Endothelial cell of umbilical vein (primary cell): ENCODE measurements at regions of chr18 and their contacts with region 1.

Region 1: GRCh38 chr18:35143622-35144596 is 96.9 kb upstream of the ZNF397 start:
- DNase-seq: peak; percentile 80
- H3K4me3 ChIP-seq: no peak overlapping the region
- H3K27ac ChIP-seq: no peak overlapping the region
- H3K4me1 ChIP-seq: no peaks in the 10 kb centered on the region
- H3K27me3 ChIP-seq: no peaks in the 10 kb centered on the region
- CTCF ChIP-seq: peak; percentile 57 to 80
- POLR2A ChIP-seq: no peak

Region 2: GRCh38 chr18:34867520-34867919 is 276.4 kb before region 1 on chr18:
- CTCF ChIA-PET with region 1: interaction called, 40 read pairs
- POLR2A ChIA-PET with region 1: no interaction called
- dilution Hi-C with region 1: no loop called
- intact Hi-C with region 1: loop called (anchors 1 kb)
- DNase-seq: peak; percentile 10
- H3K4me3 ChIP-seq: no peak overlapping the region
- H3K27ac ChIP-seq: no peak overlapping the region
- H3K4me1 ChIP-seq: no peaks in the 10 kb centered on the region
- H3K27me3 ChIP-seq: no peaks in the 10 kb centered on the region
- CTCF ChIP-seq: peak; percentile 15 to 34
- POLR2A ChIP-seq: no peak

Region 3: DNA sequence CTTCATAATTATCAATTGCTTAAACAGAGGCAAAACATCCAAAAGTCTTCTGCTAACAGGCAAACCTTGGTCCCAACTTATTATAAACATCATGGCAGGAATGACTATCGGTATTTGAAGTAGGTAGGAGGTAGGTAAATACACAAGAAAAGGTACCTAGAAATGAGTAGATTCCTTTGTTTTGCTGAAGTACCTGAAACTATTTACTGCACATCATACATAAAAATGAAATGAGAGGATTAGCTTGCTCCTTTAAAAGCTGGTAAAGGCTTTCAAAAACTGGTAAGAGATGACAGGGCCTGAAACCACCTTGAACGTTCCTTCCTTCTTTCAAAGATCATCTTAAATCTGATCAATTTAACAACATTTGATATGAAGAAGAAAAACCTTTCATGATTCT is 157.9 kb before region 1 on chr18:
- CTCF ChIA-PET with region 1: no interaction called
- POLR2A ChIA-PET with region 1: no interaction called
- dilution Hi-C with region 1: no loop called
- intact Hi-C with region 1: no loop called
- DNase-seq: no peak
- H3K4me3 ChIP-seq: no peak overlapping the region
- H3K27ac ChIP-seq: no peak overlapping the region
- H3K4me1 ChIP-seq: no peaks in the 10 kb centered on the region
- H3K27me3 ChIP-seq: peaks cover 2 to 9% of the 10 kb centered on the region in 2 experiments
- CTCF ChIP-seq: no peak
- POLR2A ChIP-seq: no peak

Region 4: DNA sequence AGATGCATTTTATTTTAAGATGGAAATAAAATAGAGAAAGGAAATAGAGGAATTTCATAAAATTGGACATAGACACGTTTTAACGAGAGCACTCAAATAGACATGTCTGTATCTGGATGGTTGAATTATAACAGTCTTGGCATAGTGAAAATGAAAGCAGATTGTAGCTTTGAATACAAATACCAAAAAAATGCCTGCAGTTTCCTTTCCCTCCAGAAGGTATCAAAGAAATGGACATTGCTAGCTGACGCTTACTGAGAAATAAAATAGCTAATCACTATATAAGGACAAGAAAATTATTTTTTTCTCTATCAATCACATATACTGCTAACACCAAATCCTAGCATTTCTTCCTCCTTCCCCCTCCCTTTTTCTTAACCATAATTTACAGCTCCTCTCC is 114.1 kb before region 1 on chr18:
- CTCF ChIA-PET with region 1: interaction called, 44 read pairs
- POLR2A ChIA-PET with region 1: interaction called, 4 read pairs
- dilution Hi-C with region 1: no loop called
- intact Hi-C with region 1: loop called (anchors 5 kb)
- DNase-seq: peak; percentile 34
- H3K4me3 ChIP-seq: no peak overlapping the region
- H3K27ac ChIP-seq: no peak overlapping the region
- H3K4me1 ChIP-seq: peaks cover 13% of the 10 kb centered on the region
- H3K27me3 ChIP-seq: no peaks in the 10 kb centered on the region
- CTCF ChIP-seq: no peak
- POLR2A ChIP-seq: no peak

Region 5: GRCh38 chr18:35071819-35072247 is 72.1 kb before region 1 on chr18:
- CTCF ChIA-PET with region 1: interaction called, 14 read pairs
- POLR2A ChIA-PET with region 1: no interaction called
- dilution Hi-C with region 1: no loop called
- intact Hi-C with region 1: loop called (anchors 5 kb)
- DNase-seq: peak; percentile 41
- H3K4me3 ChIP-seq: no peak overlapping the region
- H3K27ac ChIP-seq: peak overlapping the region; percentile 56
- H3K4me1 ChIP-seq: peaks cover 58% of the 10 kb centered on the region
- H3K27me3 ChIP-seq: no peaks in the 10 kb centered on the region
- CTCF ChIP-seq: no peak
- POLR2A ChIP-seq: no peak

Region 6: DNA sequence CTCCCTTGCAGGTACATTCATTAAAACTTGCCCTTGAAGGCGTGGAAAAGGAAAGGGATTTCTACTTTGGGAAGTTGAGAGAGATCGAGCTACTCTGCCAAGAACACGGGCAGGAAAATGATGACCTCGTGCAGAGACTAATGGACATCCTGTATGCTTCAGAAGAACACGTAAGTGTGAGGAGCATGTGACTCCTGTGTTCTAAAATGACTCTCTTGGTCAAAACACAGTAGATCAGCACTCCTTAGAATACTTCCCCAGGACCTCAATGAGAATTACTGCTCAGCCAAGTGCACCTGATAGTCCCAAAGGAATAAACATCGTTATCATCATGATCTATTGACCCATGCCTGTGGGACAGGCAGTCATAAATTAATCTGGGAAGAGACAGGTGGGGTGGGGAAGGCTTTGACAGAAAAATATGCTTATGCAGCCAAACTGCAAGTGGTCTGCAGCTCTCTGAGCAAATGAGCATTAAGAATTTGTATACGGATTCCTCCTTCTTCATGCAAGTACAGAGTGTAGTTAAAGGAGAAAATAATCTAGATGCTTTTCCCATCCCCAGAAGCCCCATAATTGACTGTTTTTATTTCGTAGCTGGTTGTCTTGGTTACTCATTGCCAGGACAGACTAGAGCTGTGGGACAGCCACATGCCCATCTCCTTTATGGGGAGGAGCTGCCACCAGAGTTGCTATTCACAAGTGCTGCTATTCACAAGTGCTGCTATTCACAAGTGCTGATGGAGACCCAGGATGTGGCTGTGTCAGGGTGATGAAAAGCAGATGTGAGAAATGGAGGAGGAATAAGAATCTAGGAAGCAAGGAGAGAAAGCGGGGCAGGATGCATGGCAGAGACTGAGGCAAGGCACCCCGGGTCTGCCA is 11.6 kb before region 1 on chr18:
- CTCF ChIA-PET with region 1: interaction called, 19 read pairs
- POLR2A ChIA-PET with region 1: no interaction called
- dilution Hi-C with region 1: no loop called
- intact Hi-C with region 1: no loop called
- DNase-seq: peak; percentile 60
- H3K4me3 ChIP-seq: no peak overlapping the region
- H3K27ac ChIP-seq: no peak overlapping the region
- H3K4me1 ChIP-seq: peaks cover 9% of the 10 kb centered on the region
- H3K27me3 ChIP-seq: no peaks in the 10 kb centered on the region
- CTCF ChIP-seq: no peak
- POLR2A ChIP-seq: no peak